ENCODE measurements at regions of chr21 and their contacts with region 1.

Region 1: GRCh38 chr21:33360881-33361602 is 36.3 kb downstream of the IFNAR1 start:
- DNase-seq: peak; percentile 72 to 79 (median 76)
- H3K4me3 ChIP-seq: peak overlapping the region in 6 of 7 experiments; percentile 23 to 79 (median 66)
- H3K27ac ChIP-seq: peak overlapping the region in 1 of 2 experiments; percentile 70
- H3K4me1 ChIP-seq: peaks cover 9 to 25% (median 21%) of the 10 kb centered on the region in 4 experiments
- H3K27me3 ChIP-seq: no peaks in the 10 kb centered on the region

Region 2: GRCh38 chr21:33199516-33200217 is 161.4 kb before region 1 on chr21:
- CTCF ChIA-PET with region 1: interaction called, 12 read pairs
- POLR2A ChIA-PET with region 1: no interaction called
- DNase-seq: peak; percentile 91 to 97 (median 96)
- H3K4me3 ChIP-seq: no peak overlapping the region
- H3K27ac ChIP-seq: no peak overlapping the region
- H3K4me1 ChIP-seq: peaks cover 0 to 14% (median 6%) of the 10 kb centered on the region in 4 experiments
- H3K27me3 ChIP-seq: no peaks in the 10 kb centered on the region

Region 3: DNA sequence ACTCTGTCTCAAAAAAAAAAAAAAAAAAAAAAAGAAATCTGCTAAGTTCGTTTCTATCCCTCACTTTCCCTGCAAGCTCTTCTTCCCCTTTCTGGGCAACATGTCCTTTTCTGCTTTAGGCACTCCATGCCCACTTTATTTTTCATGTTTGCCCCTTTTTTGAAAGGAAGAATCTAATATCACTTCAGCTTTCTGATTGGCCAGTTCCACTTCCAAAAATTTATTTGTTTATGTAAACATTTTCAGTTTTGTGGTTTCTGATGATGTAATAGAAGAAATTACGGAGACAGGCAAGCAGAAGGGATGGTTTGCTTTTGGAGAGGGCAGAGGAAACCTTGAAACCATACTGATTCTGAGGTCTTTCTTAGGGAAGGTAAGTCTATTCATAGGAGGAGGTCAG is 21.1 kb before region 1 on chr21:
- CTCF ChIA-PET with region 1: interaction called, 13 read pairs
- POLR2A ChIA-PET with region 1: interaction called, 3 read pairs
- DNase-seq: no peak
- H3K4me3 ChIP-seq: no peak overlapping the region
- H3K27ac ChIP-seq: peak overlapping the region in 1 of 2 experiments; percentile 38
- H3K4me1 ChIP-seq: peaks cover 0 to 2% (median 0%) of the 10 kb centered on the region in 4 experiments
- H3K27me3 ChIP-seq: no peaks in the 10 kb centered on the region

Region 4: DNA sequence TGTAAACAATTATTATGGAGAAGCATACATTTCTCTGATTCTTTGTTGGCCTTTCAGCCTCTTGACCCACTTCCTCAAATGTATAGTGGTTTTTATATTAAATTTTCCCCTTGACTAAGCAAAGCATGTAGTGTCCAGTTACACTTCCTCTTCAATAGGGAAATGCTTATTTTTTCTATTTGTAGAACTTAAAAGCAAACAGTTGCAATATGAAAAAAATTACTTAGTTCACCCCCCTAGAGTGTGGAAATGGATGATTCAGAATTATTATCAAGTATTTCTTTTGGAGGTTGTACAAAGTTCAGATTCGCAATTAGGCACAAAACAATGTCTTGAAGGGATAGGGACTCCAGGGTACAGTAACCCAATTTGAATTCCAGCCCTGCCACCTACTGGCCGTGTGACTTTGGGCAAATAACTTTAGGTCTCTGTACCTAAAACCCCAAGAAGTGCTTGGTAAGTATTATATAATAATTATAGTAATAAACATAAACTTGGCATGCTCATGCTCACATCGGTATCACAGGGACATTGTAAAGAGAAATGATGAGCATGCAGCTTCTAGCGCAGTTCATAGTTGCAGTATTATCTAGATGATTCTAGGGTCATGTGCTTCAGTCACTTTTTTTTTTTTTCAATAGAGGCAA is 13.5 kb after region 1 on chr21:
- CTCF ChIA-PET with region 1: interaction called, 25 read pairs
- POLR2A ChIA-PET with region 1: interaction called, 3 read pairs
- DNase-seq: peak; percentile 69 to 79 (median 78)
- H3K4me3 ChIP-seq: no peak overlapping the region
- H3K27ac ChIP-seq: no peak overlapping the region
- H3K4me1 ChIP-seq: peaks cover 12 to 24% (median 15%) of the 10 kb centered on the region in 4 experiments
- H3K27me3 ChIP-seq: no peaks in the 10 kb centered on the region

Region 5: GRCh38 chr21:33406493-33406892 is 45.5 kb after region 1 on chr21:
- CTCF ChIA-PET with region 1: interaction called, 12 read pairs
- POLR2A ChIA-PET with region 1: no interaction called
- DNase-seq: no peak
- H3K4me3 ChIP-seq: peak overlapping the region in 1 of 7 experiments; percentile 0
- H3K27ac ChIP-seq: no peak overlapping the region
- H3K4me1 ChIP-seq: peaks cover 3 to 40% (median 26%) of the 10 kb centered on the region in 4 experiments
- H3K27me3 ChIP-seq: no peaks in the 10 kb centered on the region

Measured in common myeloid progenitor, CD34-positive (primary cell).